SK-N-SH (cell line): ENCODE measurements at regions of chr10 and their contacts with region 1.

Region 1: DNA sequence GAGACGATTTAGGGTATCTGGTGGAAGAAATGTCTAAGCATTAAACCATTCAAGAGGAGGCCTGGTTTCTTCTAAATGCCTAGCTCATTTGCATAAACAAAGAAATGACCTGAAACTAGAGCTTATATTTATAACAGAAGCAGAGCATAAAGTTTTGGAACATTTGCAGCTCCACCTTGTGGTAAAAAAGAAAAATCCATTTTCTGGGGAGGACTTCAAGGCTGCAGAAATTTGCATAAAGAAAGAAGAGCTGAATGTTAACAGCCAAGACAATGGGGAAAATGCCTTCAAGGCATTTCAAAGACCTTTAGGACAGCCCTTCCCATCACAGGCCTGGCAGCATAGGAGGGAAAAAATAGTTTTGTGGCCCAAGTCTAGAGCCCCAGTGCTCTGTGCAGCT is 362.0 kb downstream of the ZNF248 start:
- DNase-seq: no peak
- H3K4me3 ChIP-seq: no peak overlapping the region
- H3K27ac ChIP-seq: no peak overlapping the region
- H3K4me1 ChIP-seq: no peaks in the 10 kb centered on the region
- H3K27me3 ChIP-seq: no peaks in the 10 kb centered on the region
- CTCF ChIP-seq: peak; percentile 62
- EP300 ChIP-seq: no peak
- RAD21 ChIP-seq: peak; percentile 34

Region 2: DNA sequence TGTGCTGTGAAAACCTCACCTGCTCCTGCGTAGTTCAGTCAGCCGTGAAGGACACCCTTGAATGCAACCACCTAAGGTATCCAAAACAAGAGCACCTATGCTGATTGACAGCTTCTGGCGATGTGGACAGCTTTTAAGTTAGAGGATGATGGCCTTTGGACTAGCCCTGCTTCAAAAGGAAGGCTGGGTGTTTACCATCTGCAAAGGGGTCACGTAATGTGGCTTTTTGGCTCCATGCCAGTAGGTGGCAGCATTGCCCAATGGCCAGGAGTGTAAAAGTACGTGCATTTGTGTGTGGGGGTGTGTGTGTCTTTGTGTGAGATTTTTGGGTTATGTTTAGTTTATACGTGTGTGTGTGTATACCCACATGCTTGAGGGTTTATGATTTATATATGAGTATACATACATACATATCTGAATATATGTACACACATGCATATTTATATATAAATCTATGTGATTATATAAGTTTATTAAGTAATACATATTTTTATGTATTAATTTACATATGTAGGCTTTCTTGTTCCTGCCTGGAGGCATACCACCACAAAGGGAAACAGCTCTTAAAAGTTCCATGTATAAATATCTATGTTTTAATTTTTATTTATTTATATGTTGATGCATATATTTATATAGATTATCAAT is 606.4 kb before region 1 on chr10:
- CTCF ChIA-PET with region 1: interaction called, 11 read pairs
- POLR2A ChIA-PET with region 1: no interaction called
- DNase-seq: peak; percentile 36
- H3K4me3 ChIP-seq: no peak overlapping the region; a peak in 1 of 4 replicates
- H3K27ac ChIP-seq: no peak overlapping the region
- H3K4me1 ChIP-seq: peaks cover 0 to 2% of the 10 kb centered on the region in 2 experiments; a peak in 1 of 4 replicates
- H3K27me3 ChIP-seq: no peaks in the 10 kb centered on the region
- CTCF ChIP-seq: peak; percentile 49
- EP300 ChIP-seq: no peak
- RAD21 ChIP-seq: peak; percentile 68

Region 3: DNA sequence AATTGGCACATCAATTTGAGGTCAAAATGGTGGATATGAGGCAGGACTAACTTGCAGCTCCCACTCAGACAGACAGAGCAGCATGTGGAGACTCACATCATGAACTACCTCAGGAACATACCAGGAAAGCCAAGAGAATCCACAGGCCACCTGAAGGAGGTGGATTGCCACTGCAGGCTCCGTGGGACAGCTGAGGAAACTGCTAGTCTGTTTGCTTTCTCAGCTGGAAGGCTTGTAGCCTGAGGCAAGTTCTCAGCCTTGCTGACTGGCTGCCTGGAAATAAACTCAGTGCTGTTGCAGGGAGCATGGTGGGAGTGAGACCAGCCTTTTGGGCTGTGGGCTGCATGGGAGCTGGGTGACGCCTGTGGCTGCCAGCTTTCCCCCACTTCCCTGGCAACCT is 159.0 kb after region 1 on chr10:
- CTCF ChIA-PET with region 1: no interaction called
- POLR2A ChIA-PET with region 1: no interaction called
- DNase-seq: no peak
- H3K4me3 ChIP-seq: no peak overlapping the region
- H3K27ac ChIP-seq: no peak overlapping the region
- H3K4me1 ChIP-seq: no peaks in the 10 kb centered on the region
- H3K27me3 ChIP-seq: no peaks in the 10 kb centered on the region
- CTCF ChIP-seq: no peak
- EP300 ChIP-seq: no peak
- RAD21 ChIP-seq: no peak

Region 4: DNA sequence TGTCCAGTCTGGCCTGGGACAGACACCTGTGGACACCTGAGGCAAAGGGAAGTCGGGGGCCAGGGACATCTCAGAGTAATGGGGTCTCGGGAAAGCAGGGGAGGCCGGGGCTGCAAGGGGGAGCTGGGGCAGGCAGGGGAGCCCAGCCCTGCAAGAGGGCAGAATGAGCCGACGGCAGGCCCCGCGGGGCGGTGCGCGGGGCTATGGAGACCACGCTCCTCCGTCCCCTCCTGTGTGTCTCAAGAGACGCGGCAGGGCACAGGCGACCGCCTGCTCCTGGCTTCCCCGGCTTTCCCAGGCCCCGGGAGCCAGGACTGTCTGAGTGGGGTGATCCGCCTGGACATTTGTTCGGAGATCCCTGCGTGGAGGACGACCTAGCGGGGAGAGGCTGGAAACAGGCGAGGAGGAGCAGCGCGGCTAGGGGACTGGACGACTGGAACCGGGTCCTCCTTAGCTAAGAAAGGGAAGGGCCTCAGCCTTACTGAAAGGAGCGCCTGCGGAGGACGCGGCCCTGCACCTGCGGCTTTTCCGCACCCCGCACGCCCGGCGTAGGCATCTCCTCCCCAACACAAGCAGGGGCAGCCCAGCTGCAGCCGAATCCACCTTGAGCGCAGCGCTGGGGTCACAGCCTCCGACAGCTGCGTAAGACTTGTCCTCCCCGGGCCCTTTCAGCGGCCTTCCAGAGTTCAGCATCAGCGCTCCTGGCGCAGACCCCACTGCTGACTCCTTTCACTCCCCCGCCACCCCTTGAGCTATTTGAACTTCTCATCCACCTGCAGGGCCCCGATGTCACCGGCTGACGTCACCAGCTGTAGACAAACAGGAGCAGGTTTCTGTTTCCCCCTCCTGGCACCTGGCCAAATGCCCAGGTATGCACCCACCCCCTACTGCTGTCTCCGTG is 185.6 kb after region 1 on chr10:
- CTCF ChIA-PET with region 1: no interaction called
- POLR2A ChIA-PET with region 1: no interaction called
- DNase-seq: no peak
- H3K4me3 ChIP-seq: no peak overlapping the region
- H3K27ac ChIP-seq: no peak overlapping the region
- H3K4me1 ChIP-seq: no peaks in the 10 kb centered on the region
- H3K27me3 ChIP-seq: no peaks in the 10 kb centered on the region
- CTCF ChIP-seq: no peak
- EP300 ChIP-seq: no peak
- RAD21 ChIP-seq: no peak